Calu3 (cell line): ENCODE measurements at regions of chr1 and their contacts with region 1.

Region 1: GRCh38 chr1:160837558-160838205 is 25.0 kb downstream of the CD244 start:
- DNase-seq: peak; percentile 65
- H3K4me3 Mint-ChIP-seq: no peak overlapping the region
- H3K27ac Mint-ChIP-seq: no peak overlapping the region
- H3K4me1 Mint-ChIP-seq: peaks cover 46% of the 10 kb centered on the region
- H3K27me3 Mint-ChIP-seq: peaks cover 30% of the 10 kb centered on the region
- CTCF ChIP-seq: no peak

Region 2: DNA sequence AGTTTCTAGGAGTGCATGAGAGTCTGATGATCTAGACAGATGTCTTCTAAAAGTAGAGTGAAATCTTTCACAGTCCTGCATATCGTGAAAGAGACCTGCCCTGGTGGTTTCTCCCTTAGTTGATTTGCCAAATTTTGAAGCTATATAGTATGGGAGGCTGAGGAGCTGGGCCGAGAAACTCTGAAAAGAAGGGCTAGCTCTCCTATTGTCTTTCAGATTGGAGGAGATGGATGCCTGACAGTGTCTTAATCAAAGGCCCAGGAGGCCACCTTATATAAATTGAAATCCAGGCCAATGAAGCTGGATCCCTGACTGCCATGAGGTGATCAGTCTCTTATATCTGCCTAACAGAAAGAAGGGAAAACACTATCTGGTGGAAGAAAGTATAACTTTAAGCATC is 240.0 kb before region 1 on chr1:
- CTCF ChIA-PET with region 1: no interaction called
- intact Hi-C with region 1: no loop called
- DNase-seq: no peak
- H3K4me3 Mint-ChIP-seq: no peak overlapping the region
- H3K27ac Mint-ChIP-seq: no peak overlapping the region
- H3K4me1 Mint-ChIP-seq: no peaks in the 10 kb centered on the region
- H3K27me3 Mint-ChIP-seq: peaks cover 72% of the 10 kb centered on the region
- CTCF ChIP-seq: no peak

Region 3: DNA sequence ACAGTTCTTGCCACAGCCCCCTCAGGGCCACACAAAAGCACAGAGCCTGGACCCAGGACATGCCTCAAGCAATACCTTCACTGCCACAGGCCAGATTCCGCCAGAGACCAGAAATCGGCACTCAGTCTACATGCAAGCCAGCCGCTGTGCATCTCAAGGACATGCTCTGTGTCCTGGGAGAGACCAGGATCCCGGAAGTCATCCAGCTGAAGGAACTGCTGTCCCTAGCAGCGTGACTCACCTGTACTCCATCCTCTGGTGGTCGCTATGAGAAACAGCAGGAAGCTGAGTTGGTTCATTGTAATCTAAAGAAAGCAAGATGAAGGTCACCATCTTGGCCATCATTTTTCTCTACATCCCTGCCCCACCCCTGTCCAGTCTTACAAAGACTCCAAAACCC is 46.9 kb after region 1 on chr1:
- CTCF ChIA-PET with region 1: no interaction called
- intact Hi-C with region 1: loop called (anchors 5 kb)
- DNase-seq: peak; percentile 24
- H3K4me3 Mint-ChIP-seq: no peak overlapping the region
- H3K27ac Mint-ChIP-seq: no peak overlapping the region
- H3K4me1 Mint-ChIP-seq: peaks cover 7% of the 10 kb centered on the region
- H3K27me3 Mint-ChIP-seq: peaks cover 14% of the 10 kb centered on the region
- CTCF ChIP-seq: peak; percentile 29

Region 4: GRCh38 chr1:160951443-160952128 is 113.9 kb after region 1 on chr1:
- CTCF ChIA-PET with region 1: interaction called, 97 read pairs
- intact Hi-C with region 1: loop called (anchors 1 kb)
- DNase-seq: peak; percentile 79
- H3K4me3 Mint-ChIP-seq: no peak overlapping the region
- H3K27ac Mint-ChIP-seq: no peak overlapping the region
- H3K4me1 Mint-ChIP-seq: peaks cover 64% of the 10 kb centered on the region
- H3K27me3 Mint-ChIP-seq: peaks cover 22% of the 10 kb centered on the region
- CTCF ChIP-seq: peak; percentile 88

Region 5: DNA sequence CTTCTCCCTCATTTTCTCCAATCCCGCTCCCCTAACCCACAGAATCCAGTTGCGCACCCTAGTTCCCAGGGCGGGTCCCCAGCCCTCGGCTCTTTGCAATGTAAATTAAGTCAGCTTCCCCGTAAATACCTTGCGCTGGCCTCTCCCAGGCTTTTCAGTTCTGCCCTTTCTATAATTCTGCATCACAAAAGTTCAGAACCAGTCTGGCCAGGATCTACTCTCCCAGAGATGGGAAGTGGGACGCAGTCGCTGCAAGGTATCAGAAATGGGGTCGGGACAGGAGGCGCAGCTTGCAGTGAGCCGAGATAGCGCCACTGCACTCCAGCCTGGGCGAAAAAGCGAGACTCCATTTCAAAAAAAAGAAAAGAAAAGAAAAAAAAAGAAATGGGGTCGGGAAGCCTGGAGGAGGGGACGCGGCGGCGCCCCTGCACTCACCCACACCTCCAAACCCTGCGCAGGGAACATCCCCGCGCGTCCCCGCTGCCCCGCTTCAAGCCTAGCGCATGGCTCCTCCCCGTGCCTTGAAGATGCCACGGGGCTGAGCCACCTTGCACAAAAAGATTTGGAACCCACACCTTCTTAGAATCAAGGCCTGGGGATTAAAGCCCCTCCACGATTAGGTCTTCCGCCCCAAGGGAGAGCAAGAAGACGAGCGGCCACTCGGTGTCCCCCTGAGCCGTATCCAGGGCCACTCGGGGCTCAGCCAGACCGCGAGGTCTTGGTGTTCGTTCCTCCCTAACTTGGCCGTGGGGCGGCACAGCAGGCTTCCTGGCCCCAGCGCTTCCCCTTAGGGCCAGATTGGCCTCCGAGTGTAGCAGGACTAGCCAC is 144.1 kb after region 1 on chr1:
- CTCF ChIA-PET with region 1: no interaction called
- intact Hi-C with region 1: no loop called
- DNase-seq: peak; percentile 28
- H3K4me3 Mint-ChIP-seq: peak overlapping the region; percentile 9
- H3K27ac Mint-ChIP-seq: no peak overlapping the region
- H3K4me1 Mint-ChIP-seq: peaks cover 18% of the 10 kb centered on the region
- H3K27me3 Mint-ChIP-seq: peaks cover 22% of the 10 kb centered on the region
- CTCF ChIP-seq: no peak

Region 6: DNA sequence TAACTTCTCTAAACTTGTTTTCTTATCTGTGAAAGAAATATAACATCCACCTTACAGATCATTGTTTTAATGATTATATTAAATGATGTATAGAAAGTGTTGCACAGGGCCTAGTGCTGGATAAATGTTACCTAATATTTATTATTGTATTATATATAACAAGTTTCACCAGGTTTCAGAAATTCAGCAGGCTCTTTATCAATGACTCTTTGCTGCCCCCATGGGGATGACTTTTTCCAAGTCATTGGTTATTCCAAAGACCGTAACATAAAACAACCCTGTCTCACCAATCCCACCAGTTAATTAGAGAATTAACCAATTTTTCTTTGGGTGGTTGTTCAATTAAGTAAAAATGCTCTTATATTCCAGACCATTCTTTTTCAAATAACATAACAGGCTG is 302.1 kb after region 1 on chr1:
- CTCF ChIA-PET with region 1: no interaction called
- intact Hi-C with region 1: loop called (anchors 5 kb)
- DNase-seq: peak; percentile 74
- H3K4me3 Mint-ChIP-seq: no peak overlapping the region
- H3K27ac Mint-ChIP-seq: no peak overlapping the region
- H3K4me1 Mint-ChIP-seq: peaks cover 9% of the 10 kb centered on the region
- H3K27me3 Mint-ChIP-seq: no peaks in the 10 kb centered on the region
- CTCF ChIP-seq: no peak